ENCODE measurements at regions of chr13 and their contacts with region 1.

Region 1: DNA sequence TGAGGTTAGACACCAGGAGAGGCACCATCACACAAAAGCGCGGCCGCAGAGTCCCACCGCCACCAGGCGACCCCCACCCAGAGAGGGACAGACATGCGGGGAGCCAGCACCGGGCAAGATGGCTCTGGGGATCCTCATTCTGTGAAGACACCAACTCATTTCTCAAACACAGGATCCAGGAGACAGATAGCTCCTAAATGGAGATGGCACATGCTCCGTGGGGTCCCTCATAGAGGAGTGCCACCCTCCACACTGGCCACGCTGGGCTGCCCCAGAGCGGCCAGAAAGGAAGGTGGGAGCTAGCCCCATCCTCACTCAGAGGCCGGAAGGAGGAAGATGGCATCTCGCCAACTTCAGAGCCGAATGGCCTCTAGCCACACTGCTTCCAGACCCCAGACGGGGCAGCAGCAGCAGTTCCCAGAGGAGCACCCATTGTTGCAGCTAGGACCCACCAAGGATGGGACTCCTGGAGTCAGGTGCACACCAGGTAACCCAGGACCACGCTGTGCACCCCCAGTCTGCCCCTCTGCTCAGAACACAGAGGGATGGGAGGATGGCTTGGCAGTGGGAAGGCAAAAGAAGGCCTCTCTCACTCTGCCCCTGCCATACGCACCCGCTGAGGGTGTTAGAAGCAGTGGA is 78.6 kb downstream of the ZIC5 start:
- DNase-seq: no peak
- ATAC-seq: no peak

Region 2: GRCh38 chr13:99758460-99759162 is 134.4 kb before region 1 on chr13:
- intact Hi-C with region 1: no loop called
- DNase-seq: no peak
- ATAC-seq: no peak

Region 3: DNA sequence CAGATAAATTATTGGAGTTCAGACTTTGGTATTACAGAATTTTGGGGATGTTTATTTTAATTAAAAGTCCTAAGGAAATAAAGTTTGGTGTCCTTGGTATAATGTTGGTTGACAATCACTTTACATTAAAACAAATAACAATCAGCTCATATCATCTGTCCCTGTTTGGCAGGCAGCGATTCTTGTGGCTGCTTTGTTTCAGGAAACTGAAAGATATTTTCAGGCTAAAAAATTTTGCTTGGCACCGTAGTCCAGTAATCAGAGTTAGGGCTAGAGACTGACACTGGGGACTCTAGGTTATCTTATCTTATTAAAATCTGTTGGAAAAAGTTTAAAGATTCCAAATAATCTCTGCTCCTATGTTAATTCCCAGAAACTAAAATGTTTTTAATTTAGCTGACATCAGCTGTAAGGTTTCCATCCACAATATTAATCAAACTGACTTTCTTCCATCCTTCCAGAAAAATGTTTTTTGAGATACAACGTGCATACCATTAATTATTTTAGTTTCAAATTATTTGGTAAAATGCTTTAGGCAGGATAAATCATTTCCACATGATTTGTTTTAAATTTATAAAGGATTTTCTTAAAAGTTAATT is 19.1 kb before region 1 on chr13:
- intact Hi-C with region 1: loop called (anchors 1 kb)
- DNase-seq: no peak
- ATAC-seq: no peak

Measured in Right ventricle myocardium inferior (tissue), 1 donor.